Left colon (tissue), 2 donors: ENCODE measurements at regions of chr18 and their contacts with region 1.

Region 1: GRCh38 chr18:9683407-9684396 is 24.4 kb upstream of the RAB31 start:
- DNase-seq: peak in 1 of 2 donors; percentile 20
- ATAC-seq: peak; percentile 65

Region 2: GRCh38 chr18:9951022-9951859 is 267.5 kb after region 1 on chr18:
- intact Hi-C with region 1: loop called in 1 of 2 experiments (anchors 10 kb)
- DNase-seq: no peak
- ATAC-seq: peak; percentile 83